ENCODE measurements at regions of chr1 and their contacts with region 1.

Region 1: GRCh38 chr1:71068325-71069240 is 12.3 kb downstream of the ZRANB2 start:
- DNase-seq: no peak
- ATAC-seq: no peak
- H3K4me3 ChIP-seq: no peak overlapping the region
- H3K27ac ChIP-seq: no peak overlapping the region
- H3K4me1 ChIP-seq: no peaks in the 10 kb centered on the region
- H3K27me3 ChIP-seq: no peaks in the 10 kb centered on the region
- CTCF ChIP-seq: no peak
- POLR2A ChIP-seq: no peak

Region 2: DNA sequence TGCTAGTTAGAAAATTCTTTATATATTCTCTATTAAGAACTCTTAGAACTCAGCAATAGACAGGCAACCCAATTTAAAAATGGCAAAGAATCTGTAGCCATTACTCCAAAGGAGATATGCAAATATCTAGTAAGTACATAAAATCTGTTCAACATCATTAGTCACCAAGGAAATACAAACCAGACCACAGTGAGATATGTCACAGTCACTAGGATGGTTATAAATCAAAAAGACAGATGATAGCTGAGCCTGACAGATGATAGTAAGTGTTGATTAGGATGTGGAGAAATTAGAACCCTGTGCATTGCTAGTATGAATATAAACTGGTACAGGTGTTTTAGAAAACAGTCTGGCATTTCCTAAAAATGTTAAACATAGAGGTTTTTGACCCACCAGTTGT is 820.8 kb before region 1 on chr1:
- intact Hi-C with region 1: loop called (anchors 10 kb)
- DNase-seq: no peak
- ATAC-seq: no peak
- H3K4me3 ChIP-seq: no peak overlapping the region
- H3K27ac ChIP-seq: no peak overlapping the region
- H3K4me1 ChIP-seq: no peaks in the 10 kb centered on the region
- H3K27me3 ChIP-seq: no peaks in the 10 kb centered on the region
- CTCF ChIP-seq: no peak
- POLR2A ChIP-seq: no peak

Region 3: GRCh38 chr1:70856201-70856600 is 212.4 kb before region 1 on chr1:
- intact Hi-C with region 1: no loop called
- DNase-seq: no peak
- ATAC-seq: no peak
- H3K4me3 ChIP-seq: no peak overlapping the region
- H3K27ac ChIP-seq: no peak overlapping the region
- H3K4me1 ChIP-seq: no peaks in the 10 kb centered on the region
- H3K27me3 ChIP-seq: no peaks in the 10 kb centered on the region
- CTCF ChIP-seq: no peak
- POLR2A ChIP-seq: no peak

Measured in body of pancreas (tissue), 4 donors.